Ascending aorta (tissue), 2 donors: ENCODE measurements at regions of chr1 and their contacts with region 1.

Region 1: DNA sequence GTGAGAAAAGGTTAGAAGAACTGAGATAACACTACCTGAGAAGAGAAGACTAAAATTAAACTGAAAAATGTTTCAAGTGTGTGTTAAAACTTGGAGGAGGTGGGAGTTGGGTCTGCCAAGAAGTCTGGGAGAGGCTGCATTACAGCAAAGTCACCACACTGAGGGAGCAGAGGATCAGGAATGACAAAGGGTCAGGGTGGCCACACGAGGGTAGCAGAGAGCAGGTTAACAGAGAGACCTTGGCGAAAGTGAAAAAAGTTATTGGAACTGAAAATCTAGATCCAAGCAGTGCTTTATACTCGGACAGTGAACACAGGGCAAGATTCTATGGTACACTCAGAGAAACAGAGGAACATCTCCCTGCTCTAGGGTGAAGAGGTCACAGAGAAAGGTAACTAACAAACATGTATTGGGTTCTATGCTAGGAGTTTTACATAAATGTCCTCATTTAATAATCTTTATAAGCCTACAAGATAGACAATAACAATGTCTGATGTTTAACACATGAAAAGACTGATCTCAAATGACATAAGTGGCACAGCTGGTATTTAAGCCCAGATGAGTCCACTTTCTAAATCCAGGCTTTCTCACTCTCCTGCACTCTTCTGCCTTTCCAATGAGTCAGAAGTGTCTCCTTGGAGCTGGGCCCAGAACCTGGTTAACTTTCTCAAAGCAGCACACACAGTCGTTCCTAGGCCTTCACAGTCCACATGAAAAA is 10.3 kb upstream of the CADM3 start:
- DNase-seq: peak in 1 of 2 donors; percentile 76
- H3K4me3 ChIP-seq: no peak overlapping the region
- H3K27ac ChIP-seq: peak overlapping the region in 1 of 2 donors; percentile 42
- H3K4me1 ChIP-seq: peaks cover 0 to 3% of the 10 kb centered on the region in 2 donors
- H3K27me3 ChIP-seq: no peaks in the 10 kb centered on the region
- CTCF ChIP-seq: peak; percentile 88 to 92 (median 90)

Region 2: DNA sequence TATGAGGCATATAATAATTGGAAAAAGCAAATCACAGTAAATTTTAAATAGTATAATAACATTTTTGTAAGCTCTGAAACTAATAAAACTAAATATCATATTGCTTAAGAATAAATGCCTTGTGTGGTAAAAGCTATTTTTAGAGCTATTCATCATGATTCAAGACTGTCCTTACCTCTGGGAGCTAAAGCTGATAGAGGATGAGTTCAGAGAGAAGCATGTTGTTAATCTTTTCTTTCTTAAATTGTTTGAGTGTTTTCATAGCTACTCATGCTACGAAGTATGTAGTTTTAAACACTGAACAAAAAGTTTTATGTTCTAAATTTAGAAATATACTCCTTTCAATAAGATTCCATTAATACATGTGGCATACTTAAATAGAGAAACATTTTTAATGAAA is 121.0 kb before region 1 on chr1:
- intact Hi-C with region 1: no loop called
- DNase-seq: no peak
- H3K4me3 ChIP-seq: no peak overlapping the region
- H3K27ac ChIP-seq: no peak overlapping the region
- H3K4me1 ChIP-seq: no peaks in the 10 kb centered on the region
- H3K27me3 ChIP-seq: no peaks in the 10 kb centered on the region
- CTCF ChIP-seq: no peak

Region 3: DNA sequence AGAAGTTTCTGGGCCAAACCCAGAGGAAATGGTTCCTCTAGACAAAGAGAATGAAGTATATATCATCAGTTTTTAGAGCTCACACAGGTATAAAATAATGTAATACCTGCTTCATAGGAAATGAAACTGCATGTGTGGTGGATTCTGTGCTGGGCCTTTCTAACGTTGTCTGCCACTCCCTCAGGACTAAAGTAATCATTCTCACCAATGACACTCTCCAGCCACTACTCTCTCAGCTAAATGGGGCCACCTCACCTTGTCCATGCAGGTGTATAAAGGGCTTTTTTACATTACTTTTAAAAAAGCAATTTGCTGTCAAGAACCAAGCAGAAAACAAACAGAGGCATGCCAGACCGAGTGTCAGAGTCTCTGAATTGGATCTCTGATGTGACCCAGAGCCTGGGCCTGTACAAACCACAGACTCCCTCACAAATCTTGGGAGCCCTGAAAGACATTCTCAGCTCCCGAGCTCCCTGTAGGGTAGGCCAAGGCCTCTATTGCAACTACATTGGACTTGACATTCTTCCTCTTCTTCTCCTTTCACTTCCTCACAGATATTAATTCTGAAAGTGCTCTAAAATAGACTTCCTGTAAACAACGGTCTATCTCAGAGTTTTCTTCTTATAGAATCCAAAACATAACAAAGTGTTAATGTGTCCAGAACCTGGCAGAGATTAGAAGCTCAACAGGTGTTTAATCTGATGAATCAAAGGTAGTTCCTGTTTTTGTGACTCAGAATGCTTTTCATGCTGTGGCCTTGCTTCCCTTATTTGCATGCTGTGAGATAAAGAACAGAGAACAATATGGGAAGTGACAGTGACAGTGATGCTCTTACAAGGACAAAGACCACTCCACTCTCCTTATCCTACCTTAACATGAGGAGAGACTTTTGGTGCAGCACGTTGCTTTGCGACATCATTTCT is 93.2 kb before region 1 on chr1:
- intact Hi-C with region 1: no loop called
- DNase-seq: no peak
- H3K4me3 ChIP-seq: no peak overlapping the region
- H3K27ac ChIP-seq: no peak overlapping the region
- H3K4me1 ChIP-seq: no peaks in the 10 kb centered on the region
- H3K27me3 ChIP-seq: no peaks in the 10 kb centered on the region
- CTCF ChIP-seq: no peak

Region 4: DNA sequence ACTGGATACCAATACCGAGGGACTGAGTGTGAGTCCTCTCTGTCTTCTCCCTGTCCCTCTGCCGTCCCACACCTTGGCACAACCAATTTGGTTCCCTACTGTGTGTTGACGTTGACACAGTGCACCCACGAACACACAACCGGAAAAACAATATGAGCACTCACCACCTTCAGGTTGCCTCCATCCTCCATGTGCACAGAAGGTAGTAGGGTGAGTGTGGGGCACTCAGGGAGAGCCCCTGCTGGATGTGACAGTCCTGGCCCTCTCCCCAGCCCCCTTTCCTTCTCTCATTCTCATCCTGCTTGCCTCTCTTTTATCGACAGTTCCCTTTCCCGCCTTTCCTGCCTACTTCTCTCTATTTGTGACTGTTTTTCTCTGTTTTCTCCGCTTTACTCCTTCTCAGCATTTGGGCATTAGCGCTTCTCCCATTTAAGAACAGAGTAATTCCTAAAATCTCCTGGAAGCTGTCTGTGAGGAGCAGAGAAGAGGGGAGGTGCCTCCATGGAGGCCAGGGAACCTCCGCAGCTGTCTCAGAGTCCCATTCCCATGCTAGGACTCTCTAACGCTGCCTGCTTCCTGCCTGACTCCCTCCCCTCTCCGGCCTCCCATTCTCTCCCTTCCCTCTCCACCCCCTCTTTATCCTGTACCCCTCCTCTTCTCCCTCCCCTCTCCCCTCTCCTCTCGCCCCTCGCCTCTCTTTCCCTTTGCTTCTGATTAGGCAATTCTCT is 26.7 kb after region 1 on chr1:
- intact Hi-C with region 1: no loop called
- DNase-seq: no peak
- H3K4me3 ChIP-seq: peak overlapping the region in 1 of 2 donors; percentile 50
- H3K27ac ChIP-seq: no peak overlapping the region
- H3K4me1 ChIP-seq: no peaks in the 10 kb centered on the region
- H3K27me3 ChIP-seq: no peaks in the 10 kb centered on the region
- CTCF ChIP-seq: no peak

Region 5: GRCh38 chr1:159197561-159198557 is 36.7 kb after region 1 on chr1:
- intact Hi-C with region 1: loop called (anchors 5 kb)
- DNase-seq: peak; percentile 19 to 79
- H3K4me3 ChIP-seq: no peak overlapping the region
- H3K27ac ChIP-seq: no peak overlapping the region
- H3K4me1 ChIP-seq: no peaks in the 10 kb centered on the region
- H3K27me3 ChIP-seq: no peaks in the 10 kb centered on the region
- CTCF ChIP-seq: peak; percentile 39 to 61 (median 50)

Region 6: GRCh38 chr1:159211331-159212136 is 50.4 kb after region 1 on chr1:
- intact Hi-C with region 1: loop called (anchors 1 kb)
- DNase-seq: no peak
- H3K4me3 ChIP-seq: no peak overlapping the region
- H3K27ac ChIP-seq: no peak overlapping the region
- H3K4me1 ChIP-seq: no peaks in the 10 kb centered on the region
- H3K27me3 ChIP-seq: no peaks in the 10 kb centered on the region
- CTCF ChIP-seq: peak; percentile 6 to 64 (median 57)

Region 7: GRCh38 chr1:159891275-159892157 is 730.4 kb after region 1 on chr1:
- intact Hi-C with region 1: loop called (anchors 10 kb)
- DNase-seq: peak; percentile 65 to 90
- H3K4me3 ChIP-seq: no peak overlapping the region
- H3K27ac ChIP-seq: peak overlapping the region in 1 of 2 donors; percentile 68
- H3K4me1 ChIP-seq: peaks cover 6 to 10% of the 10 kb centered on the region in 2 donors
- H3K27me3 ChIP-seq: no peaks in the 10 kb centered on the region
- CTCF ChIP-seq: peak; percentile 97 to 99 (median 97)

Region 8: GRCh38 chr1:160018900-160019299 is 857.7 kb after region 1 on chr1:
- intact Hi-C with region 1: loop called (anchors 10 kb)
- DNase-seq: no peak
- H3K4me3 ChIP-seq: no peak overlapping the region
- H3K27ac ChIP-seq: no peak overlapping the region
- H3K4me1 ChIP-seq: no peaks in the 10 kb centered on the region
- H3K27me3 ChIP-seq: no peaks in the 10 kb centered on the region
- CTCF ChIP-seq: no peak